ENCODE measurements at regions of chr2 and their contacts with region 1.

Region 1: GRCh38 chr2:31233741-31234682 is at the start of gene EHD3:
- DNase-seq: peak; percentile 95
- ATAC-seq: peak; percentile 92
- total RNA-seq, gene EHD3: 27.9 TPM

Region 2: DNA sequence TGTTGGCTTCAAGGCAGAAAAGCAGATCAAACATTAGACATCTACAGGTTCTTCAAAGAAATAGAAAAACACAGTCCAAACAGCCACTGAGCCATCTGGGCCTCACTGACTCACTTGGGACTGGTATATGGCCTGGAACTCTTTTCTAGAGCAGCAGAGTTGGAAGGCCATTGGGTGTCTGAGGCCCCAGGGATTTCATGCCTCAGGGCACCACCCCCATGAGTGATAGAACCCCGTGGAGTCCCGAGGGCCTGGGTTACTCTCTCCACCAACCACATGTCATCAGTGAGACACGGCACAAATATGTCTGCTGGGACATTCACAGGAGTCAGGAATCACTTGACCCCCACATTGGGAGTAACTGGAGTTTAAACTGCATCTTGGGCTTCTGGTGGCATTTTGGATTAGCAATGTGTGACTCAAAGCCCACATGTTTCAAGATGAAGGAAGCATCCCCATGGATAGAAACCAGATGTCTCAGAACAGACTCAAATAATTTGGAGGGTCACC is 470.8 kb before region 1 on chr2:
- intact Hi-C with region 1: no loop called
- DNase-seq: no peak
- ATAC-seq: no peak

Region 3: GRCh38 chr2:31031132-31031706 is 202.8 kb before region 1 on chr2:
- intact Hi-C with region 1: no loop called
- DNase-seq: no peak
- ATAC-seq: no peak

Region 4: DNA sequence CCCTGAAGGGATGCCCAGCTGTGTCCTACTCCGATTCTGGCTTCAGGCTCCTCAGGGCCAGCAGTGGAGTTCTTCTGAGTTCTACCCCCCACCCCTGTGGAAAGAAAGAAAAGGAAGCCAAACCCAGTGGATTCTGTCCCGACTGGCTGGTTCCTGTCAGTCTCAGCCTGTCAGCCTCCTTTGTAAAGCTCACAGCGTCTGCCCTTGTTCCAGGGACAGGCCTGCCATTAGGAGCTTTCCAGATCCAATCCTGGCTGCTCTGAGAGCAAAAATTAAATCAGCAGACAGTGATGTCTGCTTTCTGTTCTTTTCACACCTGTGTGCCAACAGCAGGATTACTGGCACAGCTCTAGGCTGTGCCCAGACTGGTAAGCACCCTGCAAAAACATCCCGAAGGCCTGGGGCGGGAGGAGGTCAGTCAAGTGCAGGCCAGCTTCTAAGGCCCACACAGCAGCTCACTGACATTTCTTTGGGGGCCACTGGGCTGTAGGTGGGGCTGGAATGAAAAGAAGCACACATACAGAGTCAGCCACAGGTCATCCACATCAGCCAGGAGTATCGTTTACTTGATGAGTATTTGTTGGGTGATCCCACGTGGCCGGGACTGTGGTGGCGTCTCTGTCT is 69.0 kb after region 1 on chr2:
- intact Hi-C with region 1: loop called (anchors 1 kb)
- DNase-seq: no peak
- ATAC-seq: peak; percentile 94